ENCODE measurements at regions of chr3 and their contacts with region 1.

Region 1: DNA sequence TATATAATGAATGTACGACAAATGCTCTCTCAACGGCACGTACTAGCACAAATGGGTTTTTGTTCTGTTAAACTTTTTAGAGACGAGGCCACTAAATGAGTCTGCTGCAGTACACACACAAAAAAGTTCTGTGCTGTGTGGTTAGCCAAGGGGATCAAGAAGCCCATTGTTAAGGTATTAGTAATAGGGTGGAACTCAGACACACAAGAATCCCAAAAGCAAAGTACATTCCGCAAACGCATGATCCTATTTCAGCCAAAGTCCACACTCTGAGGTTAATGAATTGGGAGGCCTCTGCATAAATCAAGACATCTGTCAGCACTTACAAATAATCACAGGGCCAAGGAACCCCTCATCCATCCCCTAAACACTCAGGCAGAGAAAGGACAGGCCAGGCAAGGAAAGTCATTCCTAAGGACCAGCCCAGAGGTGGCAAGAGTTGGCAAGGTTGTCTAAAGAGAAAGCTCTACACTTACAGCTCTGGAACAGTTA is 12.1 kb downstream of the OSBPL10 start:
- DNase-seq: no peak
- H3K4me3 ChIP-seq: peak overlapping the region; percentile 91
- H3K27ac ChIP-seq: peak overlapping the region; percentile 88
- H3K4me1 ChIP-seq: peaks cover 88% of the 10 kb centered on the region
- CTCF ChIP-seq: no peak

Region 2: GRCh38 chr3:31925271-31925630 is 43.7 kb before region 1 on chr3:
- CTCF ChIA-PET with region 1: no interaction called
- POLR2A ChIA-PET with region 1: interaction called, 24 read pairs
- intact Hi-C with region 1: no loop called
- DNase-seq: peak; percentile 60
- H3K4me3 ChIP-seq: peak overlapping the region; percentile 53
- H3K27ac ChIP-seq: peak overlapping the region; percentile 94
- H3K4me1 ChIP-seq: peaks cover 99% of the 10 kb centered on the region
- CTCF ChIP-seq: no peak

Measured in OCI-LY7 (cell line).